Heart right ventricle (tissue), 16 donors: ENCODE measurements at regions of chr5 and their contacts with region 1.

Region 1: GRCh38 chr5:26470439-26470838 is 567.9 kb downstream of the CDH9 start:
- DNase-seq: no peak
- ATAC-seq: no peak
- H3K4me3 ChIP-seq: no peak overlapping the region
- H3K27ac ChIP-seq: no peak overlapping the region
- H3K4me1 ChIP-seq: no peaks in the 10 kb centered on the region
- H3K27me3 ChIP-seq: no peaks in the 10 kb centered on the region
- CTCF ChIP-seq: no peak

Region 2: GRCh38 chr5:28110781-28111180 is 1640.3 kb after region 1 on chr5:
- intact Hi-C with region 1: loop called in 1 of 10 experiments (anchors 5 kb)
- DNase-seq: no peak
- ATAC-seq: no peak
- H3K4me3 ChIP-seq: no peak overlapping the region
- H3K27ac ChIP-seq: no peak overlapping the region
- H3K4me1 ChIP-seq: no peaks in the 10 kb centered on the region
- H3K27me3 ChIP-seq: no peaks in the 10 kb centered on the region
- CTCF ChIP-seq: no peak